ENCODE measurements at regions of chr4 and their contacts with region 1.

Region 1: DNA sequence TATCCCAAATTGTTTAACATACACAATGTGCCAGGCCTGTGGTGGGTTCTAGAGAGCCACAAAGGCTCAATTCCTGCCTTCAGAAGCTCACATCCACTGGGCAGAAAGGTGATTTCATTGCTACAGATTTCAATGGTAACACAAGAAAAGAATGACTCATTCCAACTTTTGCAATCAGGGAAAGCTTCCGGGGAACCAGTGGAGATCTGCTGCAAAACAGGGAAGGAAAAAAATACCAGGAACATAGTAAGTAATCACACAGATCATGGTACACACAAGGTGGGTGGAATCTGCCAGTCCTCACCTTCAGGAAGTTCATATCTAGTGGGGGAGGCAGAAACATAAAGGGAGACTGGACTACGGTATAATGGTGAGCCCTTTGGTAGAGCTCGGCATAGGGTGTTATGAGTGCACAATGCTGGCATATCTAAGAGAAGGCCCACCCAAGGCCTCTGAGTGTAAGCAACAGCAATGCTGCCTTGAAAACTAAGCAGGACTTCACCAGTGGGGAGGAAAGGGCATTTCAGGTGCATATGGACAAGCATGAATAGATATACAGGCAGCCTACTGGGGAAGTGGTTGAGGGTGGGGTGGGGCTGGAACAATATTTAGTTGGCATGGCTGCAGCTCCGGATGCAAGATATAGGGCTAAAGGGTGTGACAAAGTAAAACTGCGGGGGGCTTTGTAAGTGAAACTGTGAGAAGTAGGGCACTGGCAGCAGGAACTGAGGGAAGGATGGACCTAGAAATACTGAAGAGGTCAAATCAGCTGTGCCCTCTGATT is 24.2 kb downstream of the GPRIN3 start:
- DNase-seq: no peak
- H3K4me3 Mint-ChIP-seq: no peak overlapping the region
- H3K27ac Mint-ChIP-seq: peak overlapping the region; percentile 83
- H3K4me1 Mint-ChIP-seq: peaks cover 57% of the 10 kb centered on the region
- H3K27me3 Mint-ChIP-seq: no peaks in the 10 kb centered on the region

Region 2: DNA sequence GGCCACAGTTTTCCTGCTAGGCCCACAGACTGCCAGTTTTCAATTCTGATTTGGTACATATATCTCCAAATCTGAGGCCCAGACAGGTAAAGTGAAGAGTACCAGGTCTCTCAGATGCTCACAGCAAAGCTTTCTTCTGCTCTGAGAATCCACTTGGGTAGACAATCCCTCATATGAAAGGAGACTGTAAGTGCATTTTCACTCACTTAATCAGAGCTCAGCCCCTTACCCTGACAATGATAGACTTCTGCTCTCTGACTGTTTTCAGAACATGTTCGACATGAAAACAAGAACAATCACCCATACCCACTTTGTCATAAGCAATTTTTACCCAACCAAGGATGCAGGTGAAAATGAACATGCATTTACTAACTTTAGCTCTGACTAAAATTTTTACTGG is 17.1 kb after region 1 on chr4:
- intact Hi-C with region 1: loop called (anchors 1 kb)
- DNase-seq: no peak
- H3K4me3 Mint-ChIP-seq: peak overlapping the region; percentile 31
- H3K27ac Mint-ChIP-seq: peak overlapping the region; percentile 97
- H3K4me1 Mint-ChIP-seq: peaks cover 69% of the 10 kb centered on the region
- H3K27me3 Mint-ChIP-seq: no peaks in the 10 kb centered on the region

Measured in activated T-helper 2 cell treated with anti-CD3 and anti-CD28 coated beads, Interferon-gamma antibody, Interleukin-2, Interleukin-4, amounts not matched to agents 10 μg/mL and 5 μg/mL and 100 μg/mL, durations not matched to agents 14 hours and 24 hours and 36 hours (primary cell).